AG04450 (cell line): ENCODE measurements at regions of chr10 and their contacts with region 1.

Region 1: GRCh38 chr10:63145782-63146181 is 12.7 kb downstream of the NRBF2 start:
- DNase-seq: no peak
- H3K4me3 ChIP-seq: no peak overlapping the region
- H3K27ac ChIP-seq: no peak overlapping the region
- H3K27me3 ChIP-seq: no peaks in the 10 kb centered on the region
- CTCF ChIP-seq: no peak

Region 2: GRCh38 chr10:63133056-63133820 is 12.5 kb before region 1 on chr10 and contains the start of gene NRBF2:
- CTCF ChIA-PET with region 1: interaction called, 4 read pairs
- POLR2A ChIA-PET with region 1: interaction called, 15 read pairs
- DNase-seq: peak; percentile 94
- H3K4me3 ChIP-seq: peak within 1 kb of the TSS; percentile 93
- H3K27ac ChIP-seq: peak within 1 kb of the TSS; percentile 94
- H3K27me3 ChIP-seq: no peaks in the 10 kb centered on the region
- CTCF ChIP-seq: peak; percentile 35
- polyA plus RNA-seq, gene NRBF2: 27.7 and 34.5 TPM in 2 replicates

Region 3: GRCh38 chr10:63173468-63174232 is 27.9 kb after region 1 on chr10:
- CTCF ChIA-PET with region 1: no interaction called
- POLR2A ChIA-PET with region 1: no interaction called
- DNase-seq: no peak
- H3K4me3 ChIP-seq: no peak overlapping the region
- H3K27ac ChIP-seq: no peak overlapping the region
- H3K27me3 ChIP-seq: no peaks in the 10 kb centered on the region
- CTCF ChIP-seq: no peak

Region 4: DNA sequence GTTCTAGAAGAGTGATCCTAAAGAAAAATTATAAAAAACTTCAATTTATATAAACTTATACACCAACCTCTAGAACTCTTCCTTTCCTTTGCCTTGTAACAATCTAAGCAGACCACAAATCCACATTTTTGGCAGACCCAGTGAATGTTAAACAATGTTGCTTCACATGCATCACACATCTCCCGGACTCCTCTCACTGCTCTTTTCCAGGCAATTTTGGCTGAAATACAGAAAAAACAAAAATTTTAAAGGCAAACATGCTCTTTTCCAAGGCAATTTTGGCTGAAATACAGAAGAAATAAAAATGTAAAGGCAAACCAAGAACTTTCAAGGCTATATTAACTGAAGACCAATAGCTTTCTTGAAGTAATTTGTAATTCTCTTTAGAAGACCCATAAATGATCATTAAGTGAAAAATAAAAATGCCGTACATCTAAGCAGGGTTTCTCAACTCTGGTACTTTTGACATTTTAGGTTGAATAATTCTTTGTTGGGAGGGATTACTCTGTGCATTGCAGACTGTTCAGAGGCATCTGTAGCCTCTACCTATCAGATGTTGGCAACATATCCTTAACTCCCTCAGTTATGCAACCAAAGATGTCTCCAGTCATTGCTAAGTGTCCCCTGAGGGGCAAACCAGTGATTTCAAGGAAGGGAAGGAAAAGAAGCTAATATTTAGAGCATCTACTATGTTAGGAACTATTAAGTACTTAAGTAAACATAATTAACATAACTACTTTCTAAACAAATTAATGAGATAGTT is 51.7 kb after region 1 on chr10:
- CTCF ChIA-PET with region 1: no interaction called
- POLR2A ChIA-PET with region 1: no interaction called
- DNase-seq: peak; percentile 80
- H3K4me3 ChIP-seq: no peak overlapping the region
- H3K27ac ChIP-seq: no peak overlapping the region
- H3K27me3 ChIP-seq: no peaks in the 10 kb centered on the region
- CTCF ChIP-seq: no peak